Activated CD4-positive, alpha-beta T cell treated with anti-CD3 and anti-CD28 coated beads for 36 hours (primary cell): ENCODE measurements at regions of chr2 and their contacts with region 1.

Region 1: GRCh38 chr2:74553892-74554645 is at the start of gene LOXL3:
- DNase-seq: peak; percentile 89
- ATAC-seq: peak; percentile 65
- H3K4me3 Mint-ChIP-seq: peak within 1 kb of the TSS; percentile 91
- H3K27ac Mint-ChIP-seq: peak within 1 kb of the TSS; percentile 91
- H3K4me1 Mint-ChIP-seq: peaks cover 9% of the 10 kb centered on the region
- H3K27me3 Mint-ChIP-seq: peaks cover 17% of the 10 kb centered on the region
- total RNA-seq, gene LOXL3: 0.86 to 0.96 TPM

Region 2: DNA sequence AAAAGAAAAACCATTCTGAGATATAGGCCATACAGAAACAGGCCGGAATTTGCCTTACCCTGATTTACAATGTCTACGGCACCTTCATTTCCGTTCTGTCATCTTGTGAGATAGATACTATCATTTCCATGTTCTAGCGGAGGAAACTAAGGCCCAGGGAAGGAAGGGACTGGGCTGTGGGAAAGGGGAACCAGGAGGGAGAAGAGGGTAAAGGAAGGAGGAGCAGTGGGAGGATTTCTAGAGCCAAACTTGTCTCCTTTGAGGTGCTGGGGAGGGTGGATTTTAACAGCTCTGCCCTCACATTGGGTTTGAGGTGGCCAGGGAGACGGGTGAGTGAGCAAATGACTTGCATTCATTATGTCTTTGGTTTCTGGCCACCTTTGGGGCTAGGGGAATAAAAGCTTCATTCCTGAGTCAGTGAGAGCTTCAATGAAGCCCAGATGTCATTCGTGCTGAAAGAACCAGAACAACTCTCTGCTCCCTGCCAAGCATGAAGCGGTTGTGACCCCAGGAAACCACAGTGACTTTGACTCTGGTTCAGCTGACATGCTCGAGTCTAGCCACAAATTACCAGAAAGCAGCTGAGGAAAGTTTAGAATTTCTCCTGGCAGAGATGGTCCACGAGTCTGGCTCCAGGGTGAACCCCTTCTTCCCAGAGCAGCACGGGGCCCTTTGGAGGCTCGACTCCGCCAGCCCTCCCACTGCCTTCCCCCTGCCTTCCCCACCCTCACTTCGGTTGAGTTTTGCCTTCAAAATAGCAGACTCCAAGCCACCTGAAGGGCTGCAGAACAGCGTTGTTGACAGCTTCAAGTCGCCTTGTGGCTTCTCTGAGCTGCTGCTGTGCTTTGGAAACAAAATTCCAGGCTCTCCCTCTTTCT is 657.5 kb before region 1 on chr2:
- CTCF ChIA-PET with region 1: no interaction called
- POLR2A ChIA-PET with region 1: no interaction called
- intact Hi-C with region 1: no loop called
- DNase-seq: peak; percentile 66
- ATAC-seq: peak; percentile 88
- H3K4me3 Mint-ChIP-seq: no peak overlapping the region
- H3K27ac Mint-ChIP-seq: peak overlapping the region; percentile 56
- H3K4me1 Mint-ChIP-seq: peaks cover 33% of the 10 kb centered on the region
- H3K27me3 Mint-ChIP-seq: no peaks in the 10 kb centered on the region

Region 3: DNA sequence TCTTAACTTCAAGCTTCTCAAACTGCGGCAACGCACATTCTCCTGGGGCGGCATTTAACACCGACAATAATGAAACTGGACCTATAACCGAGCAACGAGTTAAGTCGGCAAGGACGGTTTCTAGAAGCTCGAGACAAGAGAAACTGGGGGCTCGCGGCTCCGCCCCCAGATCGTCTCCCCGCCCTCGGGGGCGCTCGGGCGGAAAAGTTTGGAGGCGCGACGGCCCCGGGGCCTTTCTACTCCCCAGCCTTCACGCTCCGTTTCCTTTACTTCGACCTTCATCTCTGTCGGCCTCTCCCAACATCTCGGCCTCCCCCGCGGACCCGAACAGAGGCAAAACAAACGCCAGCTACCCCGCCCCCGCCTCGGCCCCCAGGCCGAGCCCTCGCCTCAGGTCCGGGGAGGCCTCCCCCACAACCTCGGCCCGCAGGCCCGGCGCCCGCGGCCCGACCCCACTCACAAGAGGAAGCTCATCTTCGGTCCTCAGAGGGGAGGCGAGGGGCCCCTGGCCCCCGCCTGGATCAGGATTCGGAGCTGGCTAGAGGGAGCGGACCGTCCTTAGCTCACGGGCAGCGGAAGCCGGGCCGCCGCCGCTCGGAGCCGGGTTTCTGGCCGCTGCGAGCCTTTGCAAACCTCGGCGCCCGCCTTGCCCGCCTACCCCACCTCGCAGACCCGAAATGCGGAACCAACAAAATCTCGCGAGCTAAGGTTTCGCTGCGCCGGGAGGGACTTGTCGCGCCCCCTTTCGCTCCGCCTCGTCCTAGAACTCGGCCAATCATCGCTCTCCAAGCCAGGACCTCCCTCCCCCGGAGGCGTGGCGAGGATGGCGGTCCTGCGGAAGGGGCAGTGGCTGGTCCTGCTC is 375.6 kb before region 1 on chr2 and contains the start of gene MOB1A:
- CTCF ChIA-PET with region 1: no interaction called
- POLR2A ChIA-PET with region 1: no interaction called
- intact Hi-C with region 1: no loop called
- DNase-seq: peak; percentile 99
- ATAC-seq: peak; percentile 95
- H3K4me3 Mint-ChIP-seq: peak within 1 kb of the TSS; percentile 82
- H3K27ac Mint-ChIP-seq: peak within 1 kb of the TSS; percentile 87
- H3K4me1 Mint-ChIP-seq: peaks cover 42% of the 10 kb centered on the region
- H3K27me3 Mint-ChIP-seq: no peaks in the 10 kb centered on the region
- total RNA-seq, gene MOB1A: 96.6 to 149 TPM

Region 4: DNA sequence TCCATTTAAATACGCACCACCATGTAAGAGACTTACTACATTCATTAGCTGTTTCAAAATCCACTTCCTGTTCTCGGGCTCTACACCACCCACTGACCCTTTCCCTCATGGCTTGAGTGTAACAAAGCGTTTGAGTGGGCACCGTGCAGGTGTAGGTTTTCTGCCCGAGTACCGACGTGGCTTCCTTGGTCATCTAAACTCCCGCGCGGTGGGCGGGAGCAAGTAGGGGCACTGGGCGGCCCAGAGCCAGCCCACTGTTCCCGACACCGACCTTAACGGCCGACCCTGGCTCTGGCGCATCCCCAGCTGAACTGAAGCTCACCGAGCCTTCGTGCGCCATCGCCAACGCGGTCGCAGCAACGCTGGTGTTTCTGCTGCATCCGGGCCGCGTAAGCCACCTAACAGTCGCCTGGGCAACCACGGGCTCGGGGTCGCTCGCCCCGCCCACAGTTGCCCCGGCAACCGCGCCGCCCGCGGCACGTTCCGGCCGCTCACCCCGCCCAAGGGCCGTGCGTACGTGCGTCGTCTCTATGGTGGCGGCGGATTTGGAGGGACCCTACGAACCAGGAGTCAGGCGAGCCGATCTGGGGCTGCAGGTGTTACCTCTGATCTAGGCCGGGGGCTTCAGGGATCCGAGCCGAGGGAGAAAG is 132.7 kb before region 1 on chr2 and contains the starts of genes C2orf81 and WDR54:
- CTCF ChIA-PET with region 1: no interaction called
- POLR2A ChIA-PET with region 1: no interaction called
- intact Hi-C with region 1: loop called in 1 of 2 experiments (anchors 1 kb)
- DNase-seq: peak; percentile 97
- ATAC-seq: peak; percentile 92
- H3K4me3 Mint-ChIP-seq: peak within 1 kb of the TSS; percentile 91
- H3K27ac Mint-ChIP-seq: peak within 1 kb of the TSS; percentile 98
- H3K4me1 Mint-ChIP-seq: peaks cover 34% of the 10 kb centered on the region
- H3K27me3 Mint-ChIP-seq: no peaks in the 10 kb centered on the region
- total RNA-seq, gene C2orf81: 4.5 to 4.9 TPM
- total RNA-seq, gene WDR54: 103 to 119 TPM

Region 5: GRCh38 chr2:74488644-74489481 is 65.2 kb before region 1 on chr2:
- CTCF ChIA-PET with region 1: no interaction called
- POLR2A ChIA-PET with region 1: interaction called, 13 read pairs
- intact Hi-C with region 1: no loop called
- DNase-seq: no peak
- ATAC-seq: no peak
- H3K4me3 Mint-ChIP-seq: no peak overlapping the region
- H3K27ac Mint-ChIP-seq: no peak overlapping the region
- H3K4me1 Mint-ChIP-seq: peaks cover 4% of the 10 kb centered on the region
- H3K27me3 Mint-ChIP-seq: no peaks in the 10 kb centered on the region

Region 6: GRCh38 chr2:74507145-74507925 is 46.7 kb before region 1 on chr2 and contains the start of gene PCGF1:
- CTCF ChIA-PET with region 1: interaction called, 3 read pairs
- POLR2A ChIA-PET with region 1: no interaction called
- intact Hi-C with region 1: loop called in 1 of 2 experiments (anchors 1 kb)
- DNase-seq: peak; percentile 99
- ATAC-seq: peak; percentile 92
- H3K4me3 Mint-ChIP-seq: peak within 1 kb of the TSS; percentile 93
- H3K27ac Mint-ChIP-seq: peak within 1 kb of the TSS; percentile 99
- H3K4me1 Mint-ChIP-seq: peaks cover 40% of the 10 kb centered on the region
- H3K27me3 Mint-ChIP-seq: peaks cover 38% of the 10 kb centered on the region
- total RNA-seq, gene PCGF1: 21.7 to 28.7 TPM

Region 7: GRCh38 chr2:74529357-74530238 is 24.5 kb before region 1 on chr2 and contains the starts of genes AUP1 and HTRA2:
- CTCF ChIA-PET with region 1: interaction called, 4 read pairs
- POLR2A ChIA-PET with region 1: no interaction called
- intact Hi-C with region 1: loop called (anchors 1 kb)
- DNase-seq: peak; percentile 97
- ATAC-seq: peak; percentile 90
- H3K4me3 Mint-ChIP-seq: peak within 1 kb of the TSS; percentile 100
- H3K27ac Mint-ChIP-seq: peak within 1 kb of the TSS; percentile 98
- H3K4me1 Mint-ChIP-seq: peaks cover 35% of the 10 kb centered on the region
- H3K27me3 Mint-ChIP-seq: no peaks in the 10 kb centered on the region
- total RNA-seq, gene AUP1: 92.0 to 122 TPM
- total RNA-seq, gene HTRA2: 43.5 to 47.7 TPM

Region 8: GRCh38 chr2:74587664-74588277 is 33.7 kb after region 1 on chr2:
- CTCF ChIA-PET with region 1: interaction called, 8 read pairs
- POLR2A ChIA-PET with region 1: no interaction called
- intact Hi-C with region 1: loop called in 1 of 2 experiments (anchors 1 kb)
- DNase-seq: peak; percentile 75
- ATAC-seq: peak; percentile 62
- H3K4me3 Mint-ChIP-seq: no peak overlapping the region
- H3K27ac Mint-ChIP-seq: no peak overlapping the region
- H3K4me1 Mint-ChIP-seq: peaks cover 26% of the 10 kb centered on the region
- H3K27me3 Mint-ChIP-seq: peaks cover 3% of the 10 kb centered on the region

Region 9: GRCh38 chr2:74833418-74834233 is 279.6 kb after region 1 on chr2 and contains the start of gene HK2:
- CTCF ChIA-PET with region 1: no interaction called
- POLR2A ChIA-PET with region 1: no interaction called
- intact Hi-C with region 1: loop called in 1 of 2 experiments (anchors 1 kb)
- DNase-seq: peak; percentile 93
- ATAC-seq: peak; percentile 86
- H3K4me3 Mint-ChIP-seq: peak within 1 kb of the TSS; percentile 89
- H3K27ac Mint-ChIP-seq: peak within 1 kb of the TSS; percentile 95
- H3K4me1 Mint-ChIP-seq: peaks cover 48% of the 10 kb centered on the region
- H3K27me3 Mint-ChIP-seq: no peaks in the 10 kb centered on the region
- total RNA-seq, gene HK2: 84.4 to 105 TPM

Region 10: DNA sequence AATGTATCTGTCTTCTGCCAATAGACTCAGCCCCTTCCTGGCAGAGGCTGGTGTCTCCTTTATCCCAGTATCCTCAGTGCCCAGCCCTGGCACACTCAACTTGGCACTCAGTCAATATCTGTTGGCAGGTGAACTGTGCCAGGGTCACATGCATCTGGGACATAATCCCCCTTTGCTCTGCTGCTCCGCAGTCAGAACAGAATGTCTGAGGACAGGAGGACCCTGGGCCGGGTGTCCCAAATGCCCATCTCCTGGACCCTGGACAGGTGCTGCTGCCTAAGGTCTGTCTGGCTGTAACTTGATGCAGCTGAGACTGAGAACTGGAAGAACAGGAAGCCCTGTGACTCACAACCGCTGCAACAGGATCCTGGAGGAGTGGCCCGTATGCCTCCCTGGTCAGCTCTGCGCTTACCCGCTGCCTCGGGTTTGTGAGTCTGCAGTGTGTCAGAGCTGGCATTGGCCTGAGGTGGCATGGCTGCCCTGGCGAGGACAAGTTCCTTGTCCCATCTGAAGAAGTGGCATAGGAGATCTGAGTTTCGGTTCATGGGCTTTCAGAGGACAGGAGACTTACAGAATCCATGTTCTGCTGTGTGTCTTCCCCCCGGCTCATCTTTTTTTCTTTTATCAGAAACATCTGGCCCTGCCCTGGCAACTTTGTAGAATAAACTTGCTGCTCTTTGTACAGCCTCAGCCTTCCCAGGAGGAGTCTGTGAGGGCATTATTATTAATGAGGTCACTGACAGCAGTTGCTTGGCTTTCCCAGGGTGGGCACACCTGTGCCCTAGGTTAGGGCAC is 291.3 kb after region 1 on chr2:
- CTCF ChIA-PET with region 1: no interaction called
- POLR2A ChIA-PET with region 1: no interaction called
- intact Hi-C with region 1: no loop called
- DNase-seq: peak; percentile 49
- ATAC-seq: peak; percentile 33
- H3K4me3 Mint-ChIP-seq: no peak overlapping the region
- H3K27ac Mint-ChIP-seq: no peak overlapping the region
- H3K4me1 Mint-ChIP-seq: peaks cover 95% of the 10 kb centered on the region
- H3K27me3 Mint-ChIP-seq: no peaks in the 10 kb centered on the region